K562 (cell line): ENCODE measurements at regions of chr18 and their contacts with region 1.

Region 1: DNA sequence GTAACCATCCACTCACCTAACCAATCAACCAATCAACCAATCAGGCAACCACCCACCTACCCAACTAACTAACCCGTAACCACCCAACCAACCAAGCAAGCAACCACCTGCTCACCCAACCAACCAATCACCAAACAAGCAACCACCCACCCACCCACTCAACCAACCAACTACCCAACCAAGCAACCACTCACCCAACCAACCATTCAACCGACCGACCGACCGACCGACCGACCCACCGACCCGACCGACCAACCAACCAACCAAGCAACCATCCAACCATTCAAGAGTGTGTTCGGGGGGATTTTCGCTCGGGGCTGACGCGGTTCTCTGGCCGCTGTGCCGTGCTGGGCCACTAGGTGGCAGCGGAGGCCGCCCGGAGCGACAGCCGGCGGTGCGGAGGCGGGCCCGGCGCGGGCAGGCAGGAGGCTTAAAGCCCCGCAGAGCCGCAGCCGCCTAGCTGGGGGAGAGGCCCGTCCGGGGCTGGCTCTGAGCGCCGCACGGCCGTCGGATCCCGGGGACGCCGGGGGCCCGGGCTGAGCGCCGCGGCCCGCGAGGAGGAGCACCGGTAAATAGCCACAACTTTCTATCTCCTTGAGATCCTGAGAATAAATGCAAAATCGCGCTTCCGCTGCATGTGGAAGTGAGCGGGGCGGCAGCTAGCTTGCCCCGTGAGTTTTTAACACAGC is at the start of gene MC5R:
- DNase-seq: peak; percentile 60 to 82 (median 80)
- ATAC-seq: peak; percentile 97
- H3K4me3 ChIP-seq: 0 out of 2 replicates have a peak within 1 kb of the TSS, but pooled peaks have one; percentile 10
- H3K27ac ChIP-seq: no peak within 1 kb of the TSS
- H3K4me1 ChIP-seq: peaks cover 0 to 10% of the 10 kb centered on the region in 2 experiments; a peak in 2 of 5 replicates
- H3K27me3 ChIP-seq: peaks cover 0 to 11% of the 10 kb centered on the region in 2 experiments; a peak in 3 of 5 replicates
- CTCF ChIP-seq: peak; percentile 79 to 88 (median 80)
- EP300 ChIP-seq: no peak
- POLR2A ChIP-seq: no peak
- RAD21 ChIP-seq: peak; percentile 60 to 83
- polyA plus RNA-seq, gene MC5R: not detected

Region 2: DNA sequence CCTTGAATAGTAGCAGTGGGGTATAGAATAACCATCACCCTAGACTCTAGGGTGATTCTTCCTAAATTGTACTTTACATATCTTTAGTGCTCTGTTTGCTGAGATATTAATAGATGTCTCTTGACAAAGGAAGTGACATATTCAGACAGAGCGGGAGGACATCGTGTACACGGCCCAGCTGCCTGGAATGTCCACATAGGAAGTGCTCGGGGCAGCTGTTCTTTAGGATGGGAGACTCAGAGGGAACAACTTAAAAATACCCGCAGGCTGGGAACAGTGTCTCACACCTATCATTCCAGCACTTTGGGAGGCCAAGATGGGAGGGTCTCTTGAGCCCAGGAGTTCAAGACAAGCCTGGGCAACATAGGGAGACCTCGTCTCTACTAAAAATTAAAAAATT is 303.5 kb before region 1 on chr18:
- CTCF ChIA-PET with region 1: no interaction called
- POLR2A ChIA-PET with region 1: no interaction called
- in situ Hi-C with region 1: no loop called
- intact Hi-C with region 1: no loop called
- DNase-seq: no peak
- ATAC-seq: no peak
- H3K4me3 ChIP-seq: no peak overlapping the region
- H3K27ac ChIP-seq: no peak overlapping the region
- H3K4me1 ChIP-seq: no peaks in the 10 kb centered on the region
- H3K27me3 ChIP-seq: peaks cover 0 to 21% of the 10 kb centered on the region in 2 experiments; a peak in 2 of 5 replicates
- CTCF ChIP-seq: no peak
- EP300 ChIP-seq: no peak
- POLR2A ChIP-seq: no peak
- RAD21 ChIP-seq: no peak

Region 3: GRCh38 chr18:13878858-13879257 is 55.0 kb after region 1 on chr18:
- CTCF ChIA-PET with region 1: no interaction called
- POLR2A ChIA-PET with region 1: no interaction called
- in situ Hi-C with region 1: no loop called
- intact Hi-C with region 1: loop called (anchors 5 kb)
- DNase-seq: no peak
- ATAC-seq: no peak
- H3K4me3 ChIP-seq: no peak overlapping the region
- H3K27ac ChIP-seq: no peak overlapping the region
- H3K4me1 ChIP-seq: no peaks in the 10 kb centered on the region
- H3K27me3 ChIP-seq: no peaks in the 10 kb centered on the region
- CTCF ChIP-seq: no peak
- EP300 ChIP-seq: no peak
- POLR2A ChIP-seq: no peak
- RAD21 ChIP-seq: no peak

Region 4: GRCh38 chr18:14074187-14074586 is 250.3 kb after region 1 on chr18:
- CTCF ChIA-PET with region 1: interaction called, 3 read pairs
- POLR2A ChIA-PET with region 1: no interaction called
- in situ Hi-C with region 1: no loop called
- intact Hi-C with region 1: loop called (anchors 5 kb)
- DNase-seq: peak; percentile 23 to 39 (median 30)
- ATAC-seq: peak; percentile 96
- H3K4me3 ChIP-seq: no peak overlapping the region
- H3K27ac ChIP-seq: no peak overlapping the region
- H3K4me1 ChIP-seq: no peaks in the 10 kb centered on the region
- H3K27me3 ChIP-seq: no peaks in the 10 kb centered on the region
- CTCF ChIP-seq: peak; percentile 40 to 93 (median 65); a peak in 5 of 6 replicates
- EP300 ChIP-seq: no peak
- POLR2A ChIP-seq: no peak
- RAD21 ChIP-seq: peak in 1 of 2 experiments; percentile 34; a peak in 2 of 4 replicates

Region 5: GRCh38 chr18:14086458-14087231 is 262.8 kb after region 1 on chr18:
- CTCF ChIA-PET with region 1: no interaction called
- POLR2A ChIA-PET with region 1: no interaction called
- in situ Hi-C with region 1: no loop called
- intact Hi-C with region 1: loop called (anchors 1 kb)
- DNase-seq: peak; percentile 17 to 51 (median 28)
- ATAC-seq: peak; percentile 89
- H3K4me3 ChIP-seq: no peak overlapping the region
- H3K27ac ChIP-seq: no peak overlapping the region
- H3K4me1 ChIP-seq: no peaks in the 10 kb centered on the region
- H3K27me3 ChIP-seq: no peaks in the 10 kb centered on the region; a peak in 1 of 5 replicates
- CTCF ChIP-seq: peak; percentile 67 to 85 (median 74)
- EP300 ChIP-seq: no peak
- POLR2A ChIP-seq: no peak
- RAD21 ChIP-seq: peak; percentile 54 to 81